CD8-positive, alpha-beta T cell (primary cell): ENCODE measurements at regions of chr10 and their contacts with region 1.

Region 1: DNA sequence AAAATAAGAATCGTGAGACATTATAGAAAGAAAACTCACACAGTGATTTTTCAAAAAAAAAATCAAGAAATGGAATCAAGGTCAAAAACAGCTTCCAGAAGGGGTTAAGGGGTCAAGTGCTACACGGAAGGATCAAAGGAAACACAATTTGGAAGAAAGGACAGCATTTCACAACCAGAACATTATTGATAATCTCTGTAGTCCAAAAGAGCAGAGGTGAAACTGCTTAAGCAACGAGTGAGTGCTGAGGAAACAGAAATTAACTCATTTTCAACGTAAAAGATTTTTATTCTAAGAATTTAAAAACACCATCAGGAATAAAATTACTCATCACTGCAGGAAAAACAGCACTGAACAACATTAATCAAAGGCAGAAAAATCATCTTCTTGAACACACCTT is 23.5 kb downstream of the MINDY3 start:
- DNase-seq: no peak
- ATAC-seq: no peak
- H3K4me3 ChIP-seq: no peak overlapping the region
- H3K4me3 Mint-ChIP-seq: no peak overlapping the region
- H3K27ac ChIP-seq: no peak overlapping the region
- H3K27ac Mint-ChIP-seq: no peak overlapping the region
- H3K4me1 ChIP-seq: no peaks in the 10 kb centered on the region
- H3K4me1 Mint-ChIP-seq: peaks cover 10% of the 10 kb centered on the region
- H3K27me3 ChIP-seq: no peaks in the 10 kb centered on the region
- H3K27me3 Mint-ChIP-seq: no peaks in the 10 kb centered on the region
- CTCF ChIP-seq: no peak

Region 2: DNA sequence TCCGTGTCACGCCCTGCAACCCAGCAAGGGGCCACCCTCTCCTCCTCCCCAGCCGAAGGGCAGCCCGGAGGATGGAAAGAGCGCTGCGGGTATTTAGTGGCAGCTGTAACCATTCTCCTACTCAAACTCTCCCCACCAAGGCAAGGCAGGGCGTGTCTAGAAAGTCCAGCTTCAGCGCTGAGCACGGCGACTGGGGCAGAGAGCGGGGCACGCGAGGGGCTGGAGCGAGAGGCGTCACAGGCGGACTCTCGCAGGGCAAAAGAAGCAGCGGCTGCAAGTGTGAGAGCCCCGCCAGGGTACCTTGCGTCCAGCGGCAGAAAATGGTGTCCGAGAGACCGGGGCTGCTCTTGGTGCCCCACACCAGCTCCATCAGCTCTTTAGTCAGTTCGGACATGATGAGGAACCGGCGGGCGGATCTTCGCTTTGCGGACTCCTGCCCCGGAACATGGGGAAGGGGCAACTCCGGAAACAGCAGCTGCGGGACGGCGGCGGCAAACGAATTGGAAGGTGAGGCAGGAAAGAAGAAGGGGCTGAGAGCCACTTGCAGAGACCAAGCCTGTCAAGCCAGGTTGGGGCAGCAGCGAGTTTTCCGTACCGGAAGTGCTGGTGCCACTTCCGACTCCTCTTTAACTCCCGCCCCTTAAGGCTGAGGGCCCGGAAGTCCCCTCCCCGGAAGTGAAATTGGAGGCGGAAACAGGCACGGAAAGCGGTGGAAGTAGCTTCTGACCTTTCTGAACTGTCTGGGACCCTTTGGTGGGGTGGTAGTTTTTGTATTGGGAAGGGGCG is 23.3 kb after region 1 on chr10 and contains the start of gene MINDY3:
- CTCF ChIA-PET with region 1: no interaction called
- POLR2A ChIA-PET with region 1: no interaction called
- intact Hi-C with region 1: loop called in 1 of 2 experiments (anchors 1 kb)
- DNase-seq: peak; percentile 70 to 93 (median 85)
- ATAC-seq: peak; percentile 89
- H3K4me3 ChIP-seq: peak within 1 kb of the TSS; percentile 91 to 96
- H3K4me3 Mint-ChIP-seq: peak within 1 kb of the TSS; percentile 100
- H3K27ac ChIP-seq: peak within 1 kb of the TSS; percentile 62 to 63
- H3K27ac Mint-ChIP-seq: peak within 1 kb of the TSS; percentile 96
- H3K4me1 ChIP-seq: peaks cover 23% of the 10 kb centered on the region
- H3K4me1 Mint-ChIP-seq: peaks cover 43% of the 10 kb centered on the region
- H3K27me3 ChIP-seq: peaks cover 0 to 2% of the 10 kb centered on the region in 2 experiments
- H3K27me3 Mint-ChIP-seq: peaks cover 13% of the 10 kb centered on the region
- CTCF ChIP-seq: no peak
- total RNA-seq, gene MINDY3: 34.0 to 34.6 TPM

Region 3: DNA sequence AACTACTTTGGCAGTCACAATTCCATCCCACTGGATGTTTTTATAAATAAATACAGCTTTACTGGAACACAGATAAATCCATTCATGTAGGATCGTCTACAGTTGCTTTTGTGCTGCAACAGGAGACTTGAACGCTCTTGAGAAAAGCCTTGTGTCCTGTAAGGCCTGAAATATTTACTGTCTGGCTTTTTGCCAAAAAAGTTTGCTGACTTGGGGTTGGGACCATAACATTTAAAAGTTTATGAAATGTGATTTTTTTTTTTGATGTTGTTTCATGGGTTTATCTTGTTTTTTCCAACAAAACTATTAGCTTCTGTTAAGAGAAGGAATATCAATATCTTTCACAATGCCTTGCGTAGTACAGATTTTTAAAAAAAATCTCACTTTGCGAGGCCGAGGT is 94.6 kb after region 1 on chr10:
- CTCF ChIA-PET with region 1: no interaction called
- POLR2A ChIA-PET with region 1: no interaction called
- intact Hi-C with region 1: no loop called
- DNase-seq: no peak
- ATAC-seq: no peak
- H3K4me3 ChIP-seq: no peak overlapping the region
- H3K4me3 Mint-ChIP-seq: no peak overlapping the region
- H3K27ac ChIP-seq: no peak overlapping the region
- H3K27ac Mint-ChIP-seq: no peak overlapping the region
- H3K4me1 ChIP-seq: no peaks in the 10 kb centered on the region
- H3K4me1 Mint-ChIP-seq: no peaks in the 10 kb centered on the region
- H3K27me3 ChIP-seq: no peaks in the 10 kb centered on the region
- H3K27me3 Mint-ChIP-seq: peaks cover 15% of the 10 kb centered on the region
- CTCF ChIP-seq: no peak